ENCODE measurements at regions of chr10 and their contacts with region 1.

Region 1: GRCh38 chr10:11113156-11113555 is 95.5 kb downstream of the CELF2 start:
- DNase-seq: peak in 6 of 9 experiments; percentile 11 to 76 (median 38)
- ATAC-seq: peak; percentile 98
- H3K4me3 ChIP-seq: no peak overlapping the region
- H3K4me3 Mint-ChIP-seq: peak overlapping the region; percentile 49
- H3K27ac ChIP-seq: no peak overlapping the region
- H3K27ac Mint-ChIP-seq: peak overlapping the region; percentile 73
- H3K4me1 ChIP-seq: peaks cover 10% of the 10 kb centered on the region
- H3K4me1 Mint-ChIP-seq: peaks cover 18% of the 10 kb centered on the region
- H3K27me3 ChIP-seq: no peaks in the 10 kb centered on the region
- H3K27me3 Mint-ChIP-seq: no peaks in the 10 kb centered on the region
- CTCF ChIP-seq: peak; percentile 88

Region 2: GRCh38 chr10:10967029-10967428 is 146.1 kb before region 1 on chr10:
- CTCF ChIA-PET with region 1: no interaction called
- POLR2A ChIA-PET with region 1: no interaction called
- intact Hi-C with region 1: no loop called
- DNase-seq: no peak
- ATAC-seq: no peak
- H3K4me3 ChIP-seq: no peak overlapping the region
- H3K4me3 Mint-ChIP-seq: no peak overlapping the region
- H3K27ac ChIP-seq: no peak overlapping the region
- H3K27ac Mint-ChIP-seq: no peak overlapping the region
- H3K4me1 ChIP-seq: no peaks in the 10 kb centered on the region
- H3K4me1 Mint-ChIP-seq: no peaks in the 10 kb centered on the region
- H3K27me3 ChIP-seq: peaks cover 0 to 2% of the 10 kb centered on the region in 2 experiments
- H3K27me3 Mint-ChIP-seq: peaks cover 20% of the 10 kb centered on the region
- CTCF ChIP-seq: no peak

Region 3: DNA sequence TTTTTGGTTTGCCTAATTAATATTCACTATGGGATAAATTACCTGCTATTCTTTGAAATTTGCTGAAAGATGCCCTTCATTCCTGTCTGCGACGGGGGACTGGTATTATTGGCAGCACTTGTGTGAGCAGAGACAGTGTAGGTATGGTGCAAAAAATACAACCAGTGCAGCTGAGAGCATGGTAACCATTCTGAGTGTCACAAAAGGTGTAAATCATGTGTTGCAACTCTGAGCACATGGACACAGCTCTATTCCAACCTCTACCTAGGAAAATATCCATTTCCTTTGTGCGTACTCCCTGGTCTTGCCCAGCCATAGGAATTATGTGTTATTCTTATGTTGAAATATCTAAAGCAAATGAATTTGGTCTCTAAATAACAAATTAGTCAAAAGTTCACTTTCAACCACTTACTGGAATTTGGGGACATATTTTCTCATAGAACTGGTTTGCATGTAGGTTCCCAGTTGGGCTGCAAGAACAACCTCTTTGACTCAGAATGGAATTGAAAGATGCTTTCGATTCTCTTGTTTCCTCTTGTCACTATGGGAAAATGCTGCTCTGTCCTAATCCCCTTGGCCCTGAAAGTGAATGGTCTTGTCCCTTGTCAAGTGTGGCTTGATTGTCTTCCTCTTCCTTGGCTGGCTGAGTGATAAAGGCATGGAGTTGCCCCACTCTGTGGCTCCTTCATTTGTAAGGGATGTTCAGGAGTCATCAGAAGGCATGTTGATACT is 38.5 kb before region 1 on chr10:
- CTCF ChIA-PET with region 1: no interaction called
- POLR2A ChIA-PET with region 1: no interaction called
- intact Hi-C with region 1: no loop called
- DNase-seq: no peak
- ATAC-seq: no peak
- H3K4me3 ChIP-seq: no peak overlapping the region
- H3K4me3 Mint-ChIP-seq: no peak overlapping the region
- H3K27ac ChIP-seq: no peak overlapping the region
- H3K27ac Mint-ChIP-seq: no peak overlapping the region
- H3K4me1 ChIP-seq: no peaks in the 10 kb centered on the region
- H3K4me1 Mint-ChIP-seq: no peaks in the 10 kb centered on the region
- H3K27me3 ChIP-seq: no peaks in the 10 kb centered on the region
- H3K27me3 Mint-ChIP-seq: peaks cover 5% of the 10 kb centered on the region
- CTCF ChIP-seq: no peak

Region 4: DNA sequence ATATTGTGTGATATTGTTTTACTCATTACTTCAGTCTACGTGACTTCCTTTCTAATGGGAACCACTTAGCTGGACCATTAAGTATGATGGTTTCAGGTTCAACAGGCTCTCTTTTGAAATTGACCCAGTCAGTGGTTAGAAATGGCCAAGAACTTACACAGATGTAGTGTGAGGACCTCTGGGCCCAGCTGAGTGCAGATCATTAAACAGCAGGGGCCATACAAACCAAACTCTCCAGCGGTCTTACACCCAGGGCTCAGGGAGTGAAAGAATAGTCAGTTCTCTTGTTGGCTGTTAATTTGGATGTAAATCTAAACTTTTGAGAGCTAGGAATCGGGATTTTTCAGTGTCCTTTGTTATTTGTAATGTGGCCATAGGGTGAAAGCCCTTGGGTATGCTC is 11.8 kb after region 1 on chr10:
- CTCF ChIA-PET with region 1: interaction called, 26 read pairs
- POLR2A ChIA-PET with region 1: no interaction called
- intact Hi-C with region 1: no loop called
- DNase-seq: no peak
- ATAC-seq: no peak
- H3K4me3 ChIP-seq: no peak overlapping the region
- H3K4me3 Mint-ChIP-seq: no peak overlapping the region
- H3K27ac ChIP-seq: no peak overlapping the region
- H3K27ac Mint-ChIP-seq: no peak overlapping the region
- H3K4me1 ChIP-seq: no peaks in the 10 kb centered on the region
- H3K4me1 Mint-ChIP-seq: peaks cover 27% of the 10 kb centered on the region
- H3K27me3 ChIP-seq: no peaks in the 10 kb centered on the region
- H3K27me3 Mint-ChIP-seq: no peaks in the 10 kb centered on the region
- CTCF ChIP-seq: no peak

Region 5: DNA sequence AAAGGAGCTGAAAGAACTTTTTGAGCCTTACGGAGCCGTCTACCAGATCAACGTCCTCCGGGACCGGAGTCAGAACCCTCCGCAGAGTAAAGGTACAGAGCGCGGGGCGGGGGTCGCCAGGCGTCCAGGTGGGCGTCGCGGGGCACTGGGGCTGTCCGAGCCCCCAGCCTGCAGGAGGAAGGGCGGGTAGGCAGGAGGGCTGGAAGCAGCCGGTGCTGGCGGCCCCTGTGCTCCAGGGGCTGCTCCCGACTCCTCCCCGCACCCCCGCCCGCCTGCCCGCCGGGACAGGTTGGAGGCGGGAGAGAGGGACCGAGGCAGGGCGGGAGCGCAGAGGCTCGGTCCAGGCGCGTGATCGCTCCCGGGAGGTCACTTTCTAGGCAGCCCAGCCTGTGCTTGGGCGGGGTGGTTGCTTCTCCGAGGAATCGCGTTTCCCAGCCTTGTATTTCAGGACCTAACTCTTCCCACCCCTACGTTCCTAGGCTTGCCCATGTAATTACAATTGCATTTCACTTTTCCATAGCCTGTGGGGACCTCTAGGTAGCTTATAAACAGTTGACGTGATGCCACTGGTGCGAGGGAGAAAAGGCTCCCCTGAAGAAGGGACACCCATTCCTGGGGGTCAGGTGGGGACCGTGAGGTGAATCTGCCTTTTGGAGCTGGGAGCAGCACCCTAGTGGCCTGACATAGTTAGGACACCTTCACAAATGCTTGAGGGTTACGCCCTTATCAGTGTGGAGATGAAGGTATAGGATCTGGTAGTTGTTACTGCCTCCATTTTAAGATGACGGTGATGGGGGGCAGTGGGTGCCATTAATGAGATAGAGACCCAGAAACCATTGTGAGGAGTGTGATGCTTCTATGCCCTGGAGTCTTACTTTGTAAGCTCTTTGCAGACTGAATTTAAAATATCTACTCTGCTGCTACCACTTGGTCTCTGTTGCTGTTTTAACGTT is 52.7 kb after region 1 on chr10:
- CTCF ChIA-PET with region 1: interaction called, 41 read pairs
- POLR2A ChIA-PET with region 1: interaction called, 22 read pairs
- intact Hi-C with region 1: loop called (anchors 1 kb)
- DNase-seq: peak; percentile 42 to 92 (median 71)
- ATAC-seq: peak; percentile 62
- H3K4me3 ChIP-seq: peak overlapping the region; percentile 74 to 88
- H3K4me3 Mint-ChIP-seq: no peak overlapping the region
- H3K27ac ChIP-seq: peak overlapping the region; percentile 79 to 89
- H3K27ac Mint-ChIP-seq: no peak overlapping the region
- H3K4me1 ChIP-seq: peaks cover 53% of the 10 kb centered on the region
- H3K4me1 Mint-ChIP-seq: peaks cover 40% of the 10 kb centered on the region
- H3K27me3 ChIP-seq: no peaks in the 10 kb centered on the region
- H3K27me3 Mint-ChIP-seq: no peaks in the 10 kb centered on the region
- CTCF ChIP-seq: peak; percentile 75

Region 6: GRCh38 chr10:11209830-11210181 is 96.7 kb after region 1 on chr10:
- CTCF ChIA-PET with region 1: interaction called, 6 read pairs
- POLR2A ChIA-PET with region 1: no interaction called
- intact Hi-C with region 1: loop called in 1 of 2 experiments (anchors 5 kb)
- DNase-seq: peak in 3 of 9 experiments; percentile 30 to 63 (median 32)
- ATAC-seq: no peak
- H3K4me3 ChIP-seq: peak overlapping the region in 1 of 2 experiments; percentile 18
- H3K4me3 Mint-ChIP-seq: peak overlapping the region; percentile 77
- H3K27ac ChIP-seq: peak overlapping the region; percentile 7 to 64
- H3K27ac Mint-ChIP-seq: peak overlapping the region; percentile 93
- H3K4me1 ChIP-seq: peaks cover 99% of the 10 kb centered on the region
- H3K4me1 Mint-ChIP-seq: peaks cover 96% of the 10 kb centered on the region
- H3K27me3 ChIP-seq: no peaks in the 10 kb centered on the region
- H3K27me3 Mint-ChIP-seq: no peaks in the 10 kb centered on the region
- CTCF ChIP-seq: no peak

Region 7: DNA sequence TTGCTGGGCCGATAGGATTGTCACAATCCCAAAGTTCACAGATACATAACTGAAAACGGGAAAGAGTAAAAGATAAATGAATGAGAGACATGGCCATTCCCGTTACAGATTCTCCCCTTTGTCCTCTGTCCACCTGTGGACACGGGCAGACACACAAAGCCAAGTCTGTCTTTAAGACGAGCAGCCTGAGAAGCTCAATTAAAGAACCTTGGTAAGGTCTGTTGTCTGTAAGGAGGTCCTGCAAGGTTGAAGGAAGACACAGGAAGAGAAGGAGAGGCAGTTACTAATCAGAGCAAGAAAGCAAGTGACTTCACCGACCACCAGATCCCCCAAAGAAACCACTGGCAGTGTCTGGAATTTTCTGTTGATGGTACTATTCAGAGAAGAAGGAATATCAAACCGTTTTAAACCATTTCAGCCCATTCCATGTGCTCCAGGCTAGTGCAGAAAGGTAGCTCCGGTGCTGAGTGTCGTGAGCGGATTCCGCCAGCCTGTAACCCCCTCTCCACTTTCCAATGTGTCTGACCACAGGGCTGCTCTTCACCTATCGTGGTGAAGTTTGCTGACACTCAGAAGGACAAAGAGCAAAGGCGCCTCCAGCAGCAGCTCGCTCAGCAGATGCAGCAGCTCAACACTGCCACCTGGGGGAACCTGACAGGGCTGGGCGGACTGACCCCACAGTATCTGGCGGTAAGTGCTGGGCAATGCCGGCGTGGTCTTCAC is 157.1 kb after region 1 on chr10:
- CTCF ChIA-PET with region 1: interaction called, 81 read pairs
- POLR2A ChIA-PET with region 1: interaction called, 3 read pairs
- intact Hi-C with region 1: loop called (anchors 1 kb)
- DNase-seq: peak; percentile 43 to 81 (median 74)
- ATAC-seq: peak; percentile 81
- H3K4me3 ChIP-seq: no peak overlapping the region
- H3K4me3 Mint-ChIP-seq: no peak overlapping the region
- H3K27ac ChIP-seq: peak overlapping the region in 1 of 2 experiments; percentile 34
- H3K27ac Mint-ChIP-seq: peak overlapping the region; percentile 77
- H3K4me1 ChIP-seq: peaks cover 13% of the 10 kb centered on the region
- H3K4me1 Mint-ChIP-seq: peaks cover 68% of the 10 kb centered on the region
- H3K27me3 ChIP-seq: no peaks in the 10 kb centered on the region
- H3K27me3 Mint-ChIP-seq: no peaks in the 10 kb centered on the region
- CTCF ChIP-seq: peak; percentile 83

Region 8: DNA sequence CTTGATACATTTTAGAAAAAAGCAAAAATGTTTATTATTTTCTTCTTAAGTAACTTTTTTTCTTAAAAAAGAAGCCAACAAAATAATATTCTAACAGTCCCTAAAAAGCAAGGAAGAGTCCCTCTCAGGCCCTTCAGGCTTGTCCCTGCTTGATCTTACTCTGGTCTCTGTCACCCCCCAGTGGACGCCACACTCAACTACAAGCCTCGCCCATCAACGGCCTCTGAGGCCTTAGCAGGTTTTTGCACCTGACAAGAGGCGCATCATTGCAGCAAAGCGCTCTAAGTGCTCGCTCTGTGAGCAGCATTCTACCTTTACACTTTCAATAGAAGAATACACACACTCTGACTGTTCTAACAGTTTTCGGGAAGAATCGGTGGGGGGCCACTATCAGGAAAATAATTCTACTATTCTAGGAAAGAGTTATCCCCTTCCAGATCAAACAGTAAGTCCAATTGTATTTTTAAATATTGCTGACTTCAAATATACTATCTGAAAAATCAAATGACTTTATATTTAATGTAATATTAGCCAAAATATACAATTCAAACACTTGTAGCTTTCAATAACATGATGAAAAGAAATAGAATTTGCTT is 359.1 kb after region 1 on chr10:
- CTCF ChIA-PET with region 1: interaction called, 4 read pairs
- POLR2A ChIA-PET with region 1: no interaction called
- intact Hi-C with region 1: loop called (anchors 1 to 2 kb)
- DNase-seq: peak; percentile 51 to 85 (median 70)
- ATAC-seq: peak; percentile 97
- H3K4me3 ChIP-seq: no peak overlapping the region
- H3K4me3 Mint-ChIP-seq: no peak overlapping the region
- H3K27ac ChIP-seq: no peak overlapping the region
- H3K27ac Mint-ChIP-seq: no peak overlapping the region
- H3K4me1 ChIP-seq: no peaks in the 10 kb centered on the region
- H3K4me1 Mint-ChIP-seq: peaks cover 1% of the 10 kb centered on the region
- H3K27me3 ChIP-seq: no peaks in the 10 kb centered on the region
- H3K27me3 Mint-ChIP-seq: no peaks in the 10 kb centered on the region
- CTCF ChIP-seq: peak; percentile 97

Measured in CD8-positive, alpha-beta T cell (primary cell).